CD4-positive, alpha-beta memory T cell (primary cell): ENCODE measurements at regions of chr3 and their contacts with region 1.

Region 1: DNA sequence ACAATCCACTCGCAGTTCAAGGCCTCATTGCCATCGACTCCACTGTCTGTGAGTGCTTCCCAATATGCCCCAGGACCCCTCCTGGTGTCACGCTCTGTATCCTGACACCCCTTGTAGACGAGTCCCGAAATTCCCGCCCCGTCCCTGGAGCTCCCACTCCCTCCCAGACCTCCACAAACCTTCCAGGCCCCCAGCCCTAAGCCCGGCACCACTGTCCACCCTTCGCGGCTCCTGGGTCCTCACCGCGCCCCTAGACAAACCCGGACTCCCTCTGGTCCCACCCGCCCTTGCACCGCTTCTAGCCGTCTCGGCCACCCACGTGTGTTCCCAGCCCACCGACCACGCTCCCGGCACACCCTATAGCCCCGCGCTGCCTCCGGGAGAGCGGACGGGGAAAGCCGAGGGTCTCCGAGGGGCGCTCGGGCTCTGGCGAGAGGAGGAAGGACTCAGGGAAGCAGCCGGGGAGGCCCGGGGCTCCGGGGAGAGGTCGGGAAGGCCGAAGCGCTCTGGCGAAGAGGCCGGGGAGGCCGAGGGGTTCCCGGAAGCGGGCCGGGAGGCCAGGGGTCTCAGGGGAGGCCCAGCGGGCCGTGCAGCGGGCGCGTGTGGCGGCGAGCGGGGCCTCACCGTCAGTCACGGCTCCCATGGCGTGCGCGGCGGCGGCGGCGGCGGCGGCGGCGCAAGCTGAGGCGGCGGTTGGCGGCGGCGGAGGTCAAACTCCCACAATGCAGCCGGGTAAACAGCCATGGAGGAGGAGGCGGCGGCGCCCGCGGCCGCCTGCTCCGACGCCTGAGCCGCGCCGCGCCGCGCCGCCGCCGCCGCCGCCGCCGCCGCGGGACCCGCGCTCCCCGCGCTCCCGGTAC is at the starts of genes ATXN7 and THOC7:
- DNase-seq: peak; percentile 65 to 80 (median 76)
- H3K4me3 ChIP-seq: peak within 1 kb of the TSS; percentile 68 to 71
- H3K4me3 Mint-ChIP-seq: peak within 1 kb of the TSS; percentile 91 to 97 (median 94)
- H3K27ac ChIP-seq: peak within 1 kb of the TSS; percentile 76
- H3K27ac Mint-ChIP-seq: peak within 1 kb of the TSS; percentile 83 to 94 (median 92)
- H3K4me1 ChIP-seq: peaks cover 40% of the 10 kb centered on the region
- H3K4me1 Mint-ChIP-seq: peaks cover 48 to 71% (median 57%) of the 10 kb centered on the region in 4 donors
- H3K27me3 ChIP-seq: no peaks in the 10 kb centered on the region
- H3K27me3 Mint-ChIP-seq: no peaks in the 10 kb centered on the region
- total RNA-seq, gene ATXN7: 153 to 160 TPM
- total RNA-seq, gene THOC7: 40.2 TPM

Region 2: GRCh38 chr3:63709576-63709975 is 153.8 kb before region 1 on chr3:
- CTCF ChIA-PET with region 1: no interaction called
- POLR2A ChIA-PET with region 1: no interaction called
- intact Hi-C with region 1: no loop called
- DNase-seq: no peak
- H3K4me3 ChIP-seq: no peak overlapping the region
- H3K4me3 Mint-ChIP-seq: no peak overlapping the region
- H3K27ac ChIP-seq: no peak overlapping the region
- H3K27ac Mint-ChIP-seq: no peak overlapping the region
- H3K4me1 ChIP-seq: no peaks in the 10 kb centered on the region
- H3K4me1 Mint-ChIP-seq: no peaks in the 10 kb centered on the region
- H3K27me3 ChIP-seq: no peaks in the 10 kb centered on the region
- H3K27me3 Mint-ChIP-seq: peaks cover 0 to 2% of the 10 kb centered on the region in 2 donors

Region 3: DNA sequence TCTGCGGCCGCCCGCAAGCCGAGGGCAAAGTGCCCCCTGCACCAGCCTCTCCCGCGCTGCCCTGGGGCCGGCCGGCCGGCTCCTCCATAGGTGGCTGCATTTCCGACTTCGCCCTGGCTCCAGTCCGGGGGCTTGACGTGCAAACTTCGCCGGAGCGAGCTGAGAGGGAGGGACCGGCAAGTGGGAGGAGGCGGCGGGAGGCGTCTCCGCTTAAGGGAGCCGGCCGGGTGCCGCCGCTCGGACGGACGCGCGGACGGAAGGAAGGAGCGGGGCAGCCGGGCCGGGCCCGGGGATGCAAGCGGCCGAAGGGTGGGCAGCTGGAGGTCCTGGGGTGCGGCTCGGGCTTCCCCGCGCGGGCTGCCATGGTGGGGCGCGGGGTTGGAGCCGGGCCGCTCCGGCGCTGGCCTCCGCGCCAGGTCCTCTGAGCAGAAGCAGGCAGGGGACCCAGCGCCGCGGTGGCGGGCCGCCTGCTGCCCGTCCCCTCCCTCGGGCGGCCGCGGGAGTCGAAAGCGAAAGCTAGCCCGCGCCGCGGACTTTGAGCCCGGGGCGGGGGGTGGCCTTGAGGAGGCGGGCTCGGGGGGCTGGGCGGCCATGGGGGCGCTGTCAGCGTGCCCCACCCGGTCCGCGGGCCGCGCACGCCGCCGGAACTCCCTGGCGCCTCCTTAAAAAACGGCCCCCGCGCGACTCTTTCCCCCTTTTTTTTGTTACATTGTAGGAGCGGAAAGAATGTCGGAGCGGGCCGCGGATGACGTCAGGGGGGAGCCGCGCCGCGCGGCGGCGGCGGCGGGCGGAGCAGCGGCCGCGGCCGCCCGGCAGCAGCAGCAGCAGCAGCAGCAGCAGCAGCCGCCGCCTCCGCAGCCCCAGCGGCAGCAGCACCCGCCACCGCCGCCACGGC is 48.7 kb after region 1 on chr3 and contains the start of gene SCAANT1:
- CTCF ChIA-PET with region 1: no interaction called
- POLR2A ChIA-PET with region 1: interaction called, 28 read pairs
- intact Hi-C with region 1: loop called (anchors 1 kb)
- DNase-seq: peak; percentile 84 to 87 (median 84)
- H3K4me3 ChIP-seq: peak within 1 kb of the TSS; percentile 70 to 77
- H3K4me3 Mint-ChIP-seq: peak within 1 kb of the TSS; percentile 89 to 96 (median 94)
- H3K27ac ChIP-seq: peak within 1 kb of the TSS; percentile 84
- H3K27ac Mint-ChIP-seq: peak within 1 kb of the TSS; percentile 96 to 99 (median 98)
- H3K4me1 ChIP-seq: peaks cover 36% of the 10 kb centered on the region
- H3K4me1 Mint-ChIP-seq: peaks cover 30 to 61% (median 41%) of the 10 kb centered on the region in 4 donors
- H3K27me3 ChIP-seq: no peaks in the 10 kb centered on the region
- H3K27me3 Mint-ChIP-seq: no peaks in the 10 kb centered on the region
- total RNA-seq, gene SCAANT1: not detected

Region 4: GRCh38 chr3:63975723-63976122 is 112.3 kb after region 1 on chr3:
- CTCF ChIA-PET with region 1: no interaction called
- POLR2A ChIA-PET with region 1: no interaction called
- intact Hi-C with region 1: loop called (anchors 5 kb)
- DNase-seq: no peak
- H3K4me3 ChIP-seq: no peak overlapping the region
- H3K4me3 Mint-ChIP-seq: peak overlapping the region in 7 of 8 donors; percentile 19 to 84 (median 53)
- H3K27ac ChIP-seq: no peak overlapping the region
- H3K27ac Mint-ChIP-seq: peak overlapping the region; percentile 68 to 91 (median 87)
- H3K4me1 ChIP-seq: peaks cover 97% of the 10 kb centered on the region
- H3K4me1 Mint-ChIP-seq: peaks cover 79 to 98% (median 90%) of the 10 kb centered on the region in 4 donors
- H3K27me3 ChIP-seq: no peaks in the 10 kb centered on the region
- H3K27me3 Mint-ChIP-seq: no peaks in the 10 kb centered on the region